ENCODE measurements at regions of chr1 and their contacts with region 1.

Region 1: GRCh38 chr1:41791667-41792484 is 126.8 kb downstream of the HIVEP3 start:
- DNase-seq: peak; percentile 50
- ATAC-seq: peak; percentile 80
- H3K4me3 Mint-ChIP-seq: peak overlapping the region; percentile 70
- H3K27ac Mint-ChIP-seq: peak overlapping the region; percentile 94
- H3K4me1 Mint-ChIP-seq: peaks cover 42% of the 10 kb centered on the region
- H3K27me3 Mint-ChIP-seq: no peaks in the 10 kb centered on the region

Region 2: DNA sequence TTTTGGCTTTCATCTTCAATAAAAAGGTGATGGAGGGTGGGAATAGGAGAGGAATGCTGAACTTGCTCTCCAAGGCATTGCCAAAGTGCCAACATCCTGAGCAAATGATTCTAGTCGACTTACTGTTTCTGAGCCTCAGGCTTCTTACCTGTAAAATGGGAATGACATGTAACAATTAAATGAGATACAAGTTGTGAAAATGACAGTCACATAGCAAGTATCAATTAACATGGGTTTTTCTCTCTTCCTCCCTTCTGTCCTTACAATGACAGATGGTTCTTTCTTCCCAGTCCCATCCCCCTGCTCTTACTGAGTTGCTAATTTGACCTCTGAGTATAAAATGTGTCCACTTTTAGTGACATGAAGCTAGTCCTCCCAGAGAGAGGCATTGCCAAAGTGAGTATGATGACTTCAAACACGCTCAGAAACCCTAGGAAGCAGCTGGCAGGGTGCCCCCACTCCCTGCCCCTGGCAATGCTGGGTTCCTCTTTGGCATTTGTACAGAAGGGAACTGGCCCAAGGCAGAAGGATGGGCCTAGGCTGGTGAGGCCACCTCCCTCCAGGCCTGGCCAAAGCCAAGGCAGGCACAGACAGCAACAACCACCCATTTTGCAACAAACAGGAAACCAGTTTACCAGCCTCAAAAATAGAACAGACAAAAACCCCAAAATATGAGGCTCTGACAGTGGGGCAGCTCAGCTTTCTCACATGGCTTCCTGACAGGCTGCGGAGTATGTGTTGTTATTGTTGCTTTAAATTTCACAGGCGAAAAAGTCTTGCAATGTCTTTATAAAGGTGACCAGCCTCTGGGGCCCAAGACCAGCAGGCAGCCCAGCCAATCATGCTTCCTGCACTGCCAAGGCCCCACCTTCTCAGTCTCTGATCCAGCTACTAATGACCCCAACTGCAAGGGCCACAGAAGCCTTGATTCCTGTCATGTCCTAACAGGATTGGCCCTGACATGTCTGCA is 10.9 kb after region 1 on chr1:
- POLR2A ChIA-PET with region 1: interaction called, 14 read pairs
- DNase-seq: peak; percentile 52
- ATAC-seq: peak; percentile 31
- H3K4me3 Mint-ChIP-seq: peak overlapping the region; percentile 43
- H3K27ac Mint-ChIP-seq: peak overlapping the region; percentile 89
- H3K4me1 Mint-ChIP-seq: peaks cover 75% of the 10 kb centered on the region
- H3K27me3 Mint-ChIP-seq: no peaks in the 10 kb centered on the region